CD8-positive, alpha-beta T cell (primary cell): ENCODE measurements at regions of chr17 and their contacts with region 1.

Region 1: GRCh38 chr17:61635913-61636432 is 45.0 kb upstream of the NACA2 start:
- DNase-seq: peak in 8 of 9 experiments; percentile 11 to 69 (median 32)
- ATAC-seq: no peak
- H3K4me3 ChIP-seq: no peak overlapping the region
- H3K4me3 Mint-ChIP-seq: no peak overlapping the region
- H3K27ac ChIP-seq: no peak overlapping the region
- H3K27ac Mint-ChIP-seq: no peak overlapping the region
- H3K4me1 ChIP-seq: no peaks in the 10 kb centered on the region
- H3K4me1 Mint-ChIP-seq: no peaks in the 10 kb centered on the region
- H3K27me3 ChIP-seq: peaks cover 3 to 7% of the 10 kb centered on the region in 2 experiments
- H3K27me3 Mint-ChIP-seq: peaks cover 46% of the 10 kb centered on the region
- CTCF ChIP-seq: peak; percentile 49

Region 2: DNA sequence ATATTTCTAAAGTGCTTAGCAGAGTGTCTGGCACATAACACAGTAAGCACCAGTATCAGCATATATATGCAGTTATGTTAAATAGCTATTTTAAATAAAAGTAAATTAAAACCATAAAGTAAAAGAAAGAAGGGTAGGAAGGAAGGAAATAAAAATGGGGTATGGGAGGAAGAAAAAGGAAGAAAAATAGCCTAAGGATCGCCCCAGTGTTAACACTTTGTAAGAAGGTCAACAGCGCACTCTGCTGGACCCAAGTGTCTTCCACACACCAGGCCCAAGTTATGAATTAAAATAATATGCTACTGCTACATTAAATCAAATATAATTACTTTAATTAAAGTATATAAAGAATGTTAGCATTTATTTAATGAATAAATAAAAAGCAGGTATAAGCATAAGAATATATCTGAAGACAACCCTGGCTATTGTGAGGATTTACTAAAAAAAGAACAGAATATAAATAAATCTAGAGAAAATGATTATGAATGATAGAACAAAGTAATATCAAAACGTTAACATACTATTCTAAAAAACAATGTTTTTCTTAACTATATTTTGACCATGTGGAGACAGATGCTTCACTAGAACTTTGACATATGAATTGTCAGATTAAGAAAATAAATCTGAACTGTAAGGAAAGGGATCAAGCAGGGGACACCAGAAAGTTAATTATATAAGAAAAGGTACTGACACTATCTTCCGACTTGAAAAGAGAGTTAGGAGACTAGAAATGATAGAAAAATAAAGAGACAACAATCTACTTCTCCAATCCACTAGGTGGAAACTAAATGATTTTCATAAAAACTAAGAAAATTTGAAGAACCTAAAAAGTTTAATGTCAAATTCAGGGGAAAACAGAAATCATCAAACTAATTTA is 201.4 kb after region 1 on chr17:
- CTCF ChIA-PET with region 1: interaction called, 4 read pairs
- POLR2A ChIA-PET with region 1: no interaction called
- intact Hi-C with region 1: loop called in 1 of 2 experiments (anchors 1 kb)
- DNase-seq: peak; percentile 11 to 69 (median 45)
- ATAC-seq: peak; percentile 48
- H3K4me3 ChIP-seq: no peak overlapping the region
- H3K4me3 Mint-ChIP-seq: no peak overlapping the region
- H3K27ac ChIP-seq: no peak overlapping the region
- H3K27ac Mint-ChIP-seq: no peak overlapping the region
- H3K4me1 ChIP-seq: no peaks in the 10 kb centered on the region
- H3K4me1 Mint-ChIP-seq: no peaks in the 10 kb centered on the region
- H3K27me3 ChIP-seq: no peaks in the 10 kb centered on the region
- H3K27me3 Mint-ChIP-seq: no peaks in the 10 kb centered on the region
- CTCF ChIP-seq: peak; percentile 77

Region 3: DNA sequence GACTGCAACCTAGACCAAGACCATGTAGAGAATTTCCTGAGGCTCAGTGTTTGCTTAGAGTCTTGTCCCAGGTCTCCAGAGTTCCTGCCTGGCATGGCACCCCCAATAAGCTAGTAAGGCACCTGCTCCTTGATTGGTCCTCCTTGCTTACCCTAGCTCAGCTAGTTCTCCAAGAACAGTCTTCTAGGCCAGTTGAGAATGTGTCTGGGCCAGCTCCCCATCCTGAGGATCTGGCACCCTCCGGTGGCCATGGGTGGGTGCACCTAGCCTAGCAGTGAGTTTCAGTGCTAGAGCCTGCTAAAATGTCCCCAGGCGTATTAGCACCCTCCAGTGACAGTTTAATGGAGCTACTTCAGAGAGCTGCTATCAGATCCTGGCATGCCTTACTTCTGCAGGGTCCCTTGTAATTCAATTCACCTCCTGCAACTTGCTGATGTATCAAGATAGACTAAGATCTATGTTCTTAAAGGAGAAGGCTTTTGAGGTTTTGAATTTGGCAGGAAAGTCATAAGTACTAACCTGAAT is 473.5 kb after region 1 on chr17:
- CTCF ChIA-PET with region 1: no interaction called
- POLR2A ChIA-PET with region 1: no interaction called
- intact Hi-C with region 1: loop called in 1 of 2 experiments (anchors 5 kb)
- DNase-seq: peak in 8 of 9 experiments; percentile 5 to 62 (median 43)
- ATAC-seq: peak; percentile 84
- H3K4me3 ChIP-seq: no peak overlapping the region
- H3K4me3 Mint-ChIP-seq: no peak overlapping the region
- H3K27ac ChIP-seq: no peak overlapping the region
- H3K27ac Mint-ChIP-seq: no peak overlapping the region
- H3K4me1 ChIP-seq: no peaks in the 10 kb centered on the region
- H3K4me1 Mint-ChIP-seq: no peaks in the 10 kb centered on the region
- H3K27me3 ChIP-seq: no peaks in the 10 kb centered on the region
- H3K27me3 Mint-ChIP-seq: peaks cover 6% of the 10 kb centered on the region
- CTCF ChIP-seq: peak; percentile 21